Right lobe of liver (tissue), 6 donors: ENCODE measurements at regions of chr21 and their contacts with region 1.

Region 1: DNA sequence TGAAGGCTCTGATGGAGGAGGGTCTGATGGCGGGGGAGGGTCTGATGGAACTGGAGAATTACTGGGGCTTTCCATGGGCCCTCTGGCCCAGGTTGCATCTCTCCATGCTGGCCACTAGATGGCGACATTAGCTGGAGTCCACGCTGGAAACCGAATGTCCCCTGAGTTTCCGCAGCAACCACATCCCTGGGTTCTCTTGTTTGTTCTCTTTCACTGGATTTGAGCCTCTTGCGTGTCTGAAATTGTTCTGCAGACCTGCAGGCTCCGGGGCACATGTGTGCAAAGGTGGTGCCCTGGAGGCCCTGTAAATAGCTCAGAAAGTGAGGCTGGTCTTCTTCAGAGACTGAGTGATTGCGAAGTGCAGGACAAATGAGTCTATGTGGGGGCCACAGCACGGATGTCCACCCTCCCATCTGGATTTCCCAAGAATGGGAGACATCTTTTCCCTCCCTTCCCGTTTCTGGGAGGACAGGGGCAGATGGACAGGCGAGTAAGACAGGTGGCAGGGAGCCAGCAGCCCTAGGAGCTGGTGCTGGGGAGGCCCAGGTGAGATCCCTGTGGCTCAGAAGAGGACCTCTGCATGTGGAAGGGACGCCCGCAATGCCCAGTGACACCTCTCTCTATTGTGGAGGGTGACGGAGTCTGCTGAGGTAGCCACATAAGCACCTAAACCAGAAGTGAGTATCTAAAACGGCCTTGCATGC is 73.2 kb upstream of the ABCG1 start:
- DNase-seq: peak in 2 of 3 donors; percentile 43 to 66
- ATAC-seq: peak; percentile 83 to 93 (median 91)
- H3K4me3 ChIP-seq: no peak overlapping the region
- H3K27ac ChIP-seq: no peak overlapping the region
- H3K4me1 ChIP-seq: no peaks in the 10 kb centered on the region
- H3K27me3 ChIP-seq: no peaks in the 10 kb centered on the region
- CTCF ChIP-seq: peak; percentile 86 to 94 (median 92)
- POLR2A ChIP-seq: no peak

Region 2: DNA sequence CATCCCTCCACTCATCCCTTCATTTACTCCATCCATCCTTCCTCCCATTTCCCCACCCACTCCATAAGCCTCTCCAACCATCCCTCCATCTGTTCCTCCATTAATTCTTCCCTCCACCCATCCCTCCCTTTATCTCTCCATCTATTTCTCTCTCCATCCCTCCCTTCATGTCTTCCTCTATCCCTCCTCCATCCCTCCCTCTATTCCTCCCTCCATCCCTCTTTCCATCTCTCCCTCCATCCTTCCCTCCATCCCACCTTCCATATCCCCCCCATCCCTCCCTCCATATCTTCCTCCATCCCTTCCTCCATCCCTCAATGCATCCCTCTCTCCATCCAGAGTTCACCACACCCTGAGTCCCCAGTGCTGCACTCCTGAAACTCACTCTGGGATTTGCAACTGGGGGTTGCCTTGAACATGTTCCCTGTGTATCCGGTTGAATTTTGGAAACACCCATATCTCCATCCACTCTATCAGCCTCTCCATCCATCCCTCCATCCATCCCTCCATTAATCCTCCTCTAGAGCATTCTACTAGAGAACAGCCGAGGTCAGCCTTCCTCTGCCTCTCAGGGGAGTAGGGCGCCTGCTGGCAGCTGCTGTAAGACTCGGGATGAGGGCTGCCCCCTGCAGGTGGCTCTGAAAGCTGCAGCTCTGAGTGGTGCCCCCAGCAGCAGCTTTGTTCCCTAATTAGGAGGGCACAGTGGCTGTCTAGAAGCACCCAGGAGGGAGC is 112.6 kb after region 1 on chr21:
- intact Hi-C with region 1: loop called (anchors 5 kb)
- DNase-seq: peak; percentile 72 to 83 (median 74)
- ATAC-seq: peak; percentile 75 to 87 (median 83)
- H3K4me3 ChIP-seq: no peak overlapping the region
- H3K27ac ChIP-seq: no peak overlapping the region
- H3K4me1 ChIP-seq: no peaks in the 10 kb centered on the region
- H3K27me3 ChIP-seq: no peaks in the 10 kb centered on the region
- CTCF ChIP-seq: peak; percentile 81 to 89 (median 86)
- POLR2A ChIP-seq: no peak

Region 3: GRCh38 chr21:42440187-42440792 is 294.6 kb after region 1 on chr21:
- intact Hi-C with region 1: loop called in 1 of 2 experiments (anchors 10 kb)
- DNase-seq: no peak
- ATAC-seq: no peak
- H3K4me3 ChIP-seq: no peak overlapping the region
- H3K27ac ChIP-seq: no peak overlapping the region
- H3K4me1 ChIP-seq: no peaks in the 10 kb centered on the region
- H3K27me3 ChIP-seq: no peaks in the 10 kb centered on the region
- CTCF ChIP-seq: no peak
- POLR2A ChIP-seq: no peak